Vagina (tissue), 2 donors: ENCODE measurements at regions of chr12 and their contacts with region 1.

Region 1: GRCh38 chr12:6533923-6534694 is at the start of gene GAPDH:
- DNase-seq: peak in 1 of 2 donors; percentile 95
- H3K4me3 ChIP-seq: peak within 1 kb of the TSS; percentile 65 to 96
- H3K27ac ChIP-seq: peak within 1 kb of the TSS; percentile 87
- H3K4me1 ChIP-seq: peaks cover 49% of the 10 kb centered on the region
- H3K27me3 ChIP-seq: no peaks in the 10 kb centered on the region
- CTCF ChIP-seq: no peak
- POLR2A ChIP-seq: peak in 1 of 2 donors; percentile 87
- total RNA-seq, gene GAPDH: 2,297 TPM

Region 2: DNA sequence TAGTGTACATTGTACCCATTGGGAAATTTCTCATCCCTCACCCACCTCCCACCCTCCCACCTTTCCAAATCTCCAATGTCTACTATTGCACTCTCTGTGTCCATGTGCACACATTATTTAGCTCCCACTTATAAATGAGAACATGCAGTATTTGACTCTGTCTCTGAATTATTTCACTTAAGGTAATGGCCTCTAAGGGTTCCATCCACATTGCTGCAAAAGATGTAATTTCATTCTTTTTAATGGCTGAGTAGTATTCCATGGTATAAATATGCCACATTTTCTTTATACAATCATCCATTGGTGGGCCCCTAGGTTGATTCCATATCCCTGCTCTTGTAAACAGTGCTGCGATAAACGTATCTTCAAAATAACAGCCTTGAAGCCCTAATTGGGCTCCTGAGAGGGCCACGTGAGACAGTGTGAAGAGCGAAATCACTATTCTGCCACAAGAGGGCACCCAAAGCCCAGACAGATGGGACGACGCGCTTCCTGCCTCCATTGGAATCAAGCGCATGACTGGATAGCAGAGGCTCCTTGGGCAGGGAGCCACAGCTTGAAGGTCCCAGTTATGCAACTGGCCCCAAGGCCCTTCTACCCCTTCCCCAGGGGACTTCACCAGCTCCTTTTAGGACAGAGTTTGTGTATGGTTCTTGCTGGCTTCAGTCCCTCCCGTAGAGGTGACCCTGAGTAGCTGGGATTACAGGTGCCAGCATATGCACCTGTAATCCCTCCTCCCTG is 110.7 kb before region 1 on chr12:
- intact Hi-C with region 1: loop called (anchors 5 kb)
- DNase-seq: no peak
- H3K4me3 ChIP-seq: no peak overlapping the region
- H3K27ac ChIP-seq: no peak overlapping the region
- H3K4me1 ChIP-seq: peaks cover 4% of the 10 kb centered on the region
- H3K27me3 ChIP-seq: no peaks in the 10 kb centered on the region
- CTCF ChIP-seq: peak; percentile 84 to 96 (median 94)
- POLR2A ChIP-seq: no peak

Region 3: GRCh38 chr12:6493497-6494257 is 40.4 kb before region 1 on chr12 and contains the start of gene NCAPD2:
- intact Hi-C with region 1: loop called (anchors 5 kb)
- DNase-seq: peak; percentile 98
- H3K4me3 ChIP-seq: peak within 1 kb of the TSS; percentile 77 to 90
- H3K27ac ChIP-seq: peak within 1 kb of the TSS; percentile 96
- H3K4me1 ChIP-seq: peaks cover 25% of the 10 kb centered on the region
- H3K27me3 ChIP-seq: no peaks in the 10 kb centered on the region
- CTCF ChIP-seq: peak in 1 of 3 experiments; percentile 65
- POLR2A ChIP-seq: no peak
- total RNA-seq, gene NCAPD2: 25.5 TPM